WTC11 (cell line): ENCODE measurements at regions of chr14 and their contacts with region 1.

Region 1: DNA sequence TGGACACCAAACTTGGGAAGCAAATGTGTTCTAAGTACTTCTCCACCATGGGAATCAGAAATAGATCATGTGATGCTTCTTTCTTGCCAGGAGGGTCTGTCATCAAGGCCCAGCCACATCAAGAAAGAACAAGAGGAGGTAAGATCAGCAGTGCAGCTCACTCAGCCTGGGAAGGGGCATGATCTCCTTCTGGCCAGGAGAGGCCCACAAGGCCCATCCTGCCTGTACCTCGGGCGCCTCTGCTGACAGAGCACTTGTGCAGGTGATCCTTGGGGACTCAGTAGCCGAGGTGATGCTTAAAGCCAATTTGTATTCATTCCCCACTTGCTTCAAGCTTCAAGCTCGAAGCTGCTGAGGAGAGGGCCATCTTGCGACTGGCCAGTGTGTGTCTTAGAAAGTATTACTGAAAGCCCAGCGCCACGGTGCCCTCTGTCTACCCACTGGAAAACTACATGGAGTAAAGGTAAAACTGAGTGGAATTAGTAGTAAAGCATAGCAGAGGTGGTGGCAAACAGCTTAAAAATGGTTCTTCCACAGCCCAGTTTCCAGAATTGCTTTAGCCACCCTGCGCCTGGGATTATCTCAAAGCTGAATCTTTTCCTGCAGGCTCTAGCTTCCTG is 26.2 kb downstream of the RTRAF start:
- DNase-seq: peak; percentile 55
- ATAC-seq: peak; percentile 75
- H3K4me3 Mint-ChIP-seq: no peak overlapping the region
- H3K27ac Mint-ChIP-seq: no peak overlapping the region
- H3K4me1 Mint-ChIP-seq: peaks cover 36% of the 10 kb centered on the region
- H3K27me3 Mint-ChIP-seq: no peaks in the 10 kb centered on the region
- CTCF ChIP-seq: no peak; the same call in 1 of the 2 replicates

Region 2: DNA sequence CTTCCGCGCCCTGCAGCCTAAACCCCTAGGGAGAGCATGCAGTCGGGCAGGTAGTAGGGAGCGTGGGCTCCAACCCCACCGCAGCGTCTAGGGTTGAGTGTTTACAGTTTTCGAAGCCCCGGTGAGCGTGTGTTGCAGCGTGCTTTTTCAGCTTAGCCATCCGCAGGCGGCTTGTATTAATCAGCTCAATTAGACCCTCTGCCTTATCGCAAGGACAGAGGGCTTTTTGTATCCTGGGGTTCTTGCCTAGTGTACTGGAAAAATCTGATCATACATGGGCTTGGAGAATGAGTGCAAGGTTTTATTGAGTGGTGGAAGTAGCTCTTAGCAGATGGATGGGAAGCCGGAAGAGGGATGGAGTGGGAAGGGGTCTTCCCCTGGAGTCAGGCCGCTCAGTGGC is 199.5 kb before region 1 on chr14:
- CTCF ChIA-PET with region 1: no interaction called
- POLR2A ChIA-PET with region 1: no interaction called
- DNase-seq: no peak
- ATAC-seq: peak; percentile 39; the same call in 1 of the 2 replicates
- H3K4me3 Mint-ChIP-seq: no peak overlapping the region
- H3K27ac Mint-ChIP-seq: no peak overlapping the region
- H3K4me1 Mint-ChIP-seq: peaks cover 23% of the 10 kb centered on the region
- H3K27me3 Mint-ChIP-seq: no peaks in the 10 kb centered on the region
- CTCF ChIP-seq: no peak

Region 3: GRCh38 chr14:52068615-52069303 is 53.2 kb after region 1 on chr14 and contains the start of gene NID2:
- CTCF ChIA-PET with region 1: interaction called, 19 read pairs
- POLR2A ChIA-PET with region 1: no interaction called
- DNase-seq: peak; percentile 91
- ATAC-seq: peak; percentile 86
- H3K4me3 Mint-ChIP-seq: peak within 1 kb of the TSS; percentile 77
- H3K27ac Mint-ChIP-seq: no peak within 1 kb of the TSS
- H3K4me1 Mint-ChIP-seq: peaks cover 18% of the 10 kb centered on the region
- H3K27me3 Mint-ChIP-seq: peaks cover 63% of the 10 kb centered on the region
- CTCF ChIP-seq: no peak
- total RNA-seq, gene NID2: 5.4 to 8.5 TPM (median 6.3 TPM) in 3 replicates

Region 4: GRCh38 chr14:52124791-52125661 is 109.5 kb after region 1 on chr14:
- CTCF ChIA-PET with region 1: interaction called, 12 read pairs
- POLR2A ChIA-PET with region 1: no interaction called
- DNase-seq: no peak
- ATAC-seq: peak; percentile 86
- H3K4me3 Mint-ChIP-seq: no peak overlapping the region
- H3K27ac Mint-ChIP-seq: no peak overlapping the region; the same call in 1 of the 2 replicates
- H3K4me1 Mint-ChIP-seq: peaks cover 31% of the 10 kb centered on the region
- H3K27me3 Mint-ChIP-seq: no peaks in the 10 kb centered on the region
- CTCF ChIP-seq: no peak

Region 5: DNA sequence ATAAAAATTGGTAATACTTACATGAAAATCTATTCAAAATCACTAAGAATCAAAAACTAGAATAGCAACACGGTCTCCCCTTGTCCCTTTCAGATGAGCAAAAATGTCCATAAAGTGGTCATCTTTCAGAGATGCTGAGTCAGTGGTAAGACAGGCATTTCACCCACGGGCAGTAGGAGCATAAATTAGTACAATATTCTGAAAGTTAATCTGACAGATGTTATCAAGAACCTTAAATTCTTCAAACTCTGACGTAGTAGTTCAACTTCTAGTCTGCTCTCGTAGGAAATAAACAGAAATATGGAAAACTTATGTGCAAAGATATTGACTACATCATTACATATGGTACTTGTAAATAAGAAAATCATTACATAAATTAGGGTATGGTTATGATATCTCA is 809.0 kb after region 1 on chr14:
- CTCF ChIA-PET with region 1: no interaction called
- POLR2A ChIA-PET with region 1: no interaction called
- DNase-seq: no peak
- ATAC-seq: no peak
- H3K4me3 Mint-ChIP-seq: no peak overlapping the region
- H3K27ac Mint-ChIP-seq: no peak overlapping the region
- H3K4me1 Mint-ChIP-seq: peaks cover 11% of the 10 kb centered on the region
- H3K27me3 Mint-ChIP-seq: no peaks in the 10 kb centered on the region
- CTCF ChIP-seq: no peak